AG04450 (cell line): ENCODE measurements at regions of chr5 and their contacts with region 1.

Region 1: DNA sequence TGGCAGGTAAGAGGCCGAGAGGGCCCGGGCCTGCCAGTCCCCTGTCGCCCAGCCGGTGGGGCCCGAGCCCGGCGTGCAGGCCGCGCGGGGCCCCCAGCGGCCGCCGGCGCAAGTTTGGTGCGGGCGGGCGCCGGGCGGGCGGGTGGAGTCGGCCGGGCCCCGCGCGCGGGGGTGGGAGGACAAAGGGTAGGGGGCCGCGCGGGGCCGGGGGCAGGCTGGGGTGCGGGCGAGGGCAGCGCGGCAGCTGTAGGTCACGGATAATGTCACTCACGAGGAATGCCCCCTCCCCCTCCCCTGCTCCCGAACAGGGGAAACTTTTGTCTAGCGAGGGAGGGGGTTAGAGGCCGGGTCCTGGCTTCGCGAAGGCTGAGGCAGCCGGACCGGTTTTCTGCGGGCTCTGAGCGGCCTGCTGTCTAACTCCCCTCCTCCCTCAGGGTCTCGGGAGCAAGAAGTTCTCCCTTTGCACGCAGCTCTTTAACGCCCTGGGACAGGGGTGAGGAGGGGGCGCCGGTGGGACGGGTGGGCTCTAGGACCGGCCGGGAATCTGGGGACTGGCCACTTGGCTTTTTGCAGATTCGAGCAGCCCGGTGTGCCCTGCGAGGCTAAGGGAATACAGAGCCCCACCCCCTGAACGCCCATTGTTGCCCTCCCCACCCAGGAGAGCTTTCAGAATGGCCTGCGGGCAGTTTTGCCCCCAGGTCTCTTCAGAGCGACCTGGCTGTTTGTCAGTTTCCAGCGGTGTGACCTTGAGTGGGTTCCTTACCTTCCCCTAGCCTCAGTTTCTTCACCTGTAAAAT is 21.3 kb upstream of the NDST1 start:
- DNase-seq: no peak
- H3K4me3 ChIP-seq: peak overlapping the region; percentile 87
- H3K27ac ChIP-seq: peak overlapping the region; percentile 77
- H3K27me3 ChIP-seq: no peaks in the 10 kb centered on the region
- CTCF ChIP-seq: no peak

Region 2: DNA sequence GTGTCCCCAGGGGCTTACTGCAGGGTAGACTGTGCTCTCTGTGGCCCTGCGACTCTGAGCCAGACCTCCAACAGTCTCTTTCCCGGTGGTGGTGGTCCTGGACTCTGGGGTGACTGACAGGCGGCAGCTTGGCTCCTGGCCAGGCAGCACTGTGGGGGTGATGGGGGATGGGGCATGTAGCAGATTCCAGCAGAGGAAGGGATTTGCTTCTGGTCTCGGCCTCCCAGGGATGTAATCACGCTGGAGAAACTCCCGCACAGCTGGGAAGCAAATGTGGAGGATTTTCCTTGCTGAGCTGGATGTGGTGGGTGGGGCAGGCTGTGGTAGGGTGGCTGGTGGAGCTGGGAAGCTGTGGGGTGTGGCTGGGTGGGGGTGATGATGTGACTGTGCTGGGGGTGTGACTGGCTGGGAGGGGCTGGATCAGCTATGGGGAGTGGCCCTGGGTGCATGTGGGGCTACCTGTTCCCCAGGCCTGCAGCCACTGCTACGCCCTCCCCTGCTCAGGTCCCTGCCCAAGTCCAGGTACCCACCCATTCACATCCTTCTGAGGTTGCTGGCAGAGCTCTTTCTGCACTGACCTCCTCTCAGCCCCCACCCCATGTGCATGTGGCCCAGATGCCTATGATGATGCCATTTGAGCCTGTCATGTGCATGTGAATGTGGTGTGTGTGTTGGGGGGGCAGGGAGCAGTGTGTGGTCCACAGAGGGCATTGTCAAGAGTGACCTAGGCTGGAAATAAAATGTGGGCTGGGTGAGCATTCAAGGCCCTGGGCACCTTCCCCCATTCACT is 25.2 kb after region 1 on chr5:
- CTCF ChIA-PET with region 1: interaction called, 5 read pairs
- POLR2A ChIA-PET with region 1: interaction called, 11 read pairs
- DNase-seq: no peak
- H3K4me3 ChIP-seq: no peak overlapping the region
- H3K27ac ChIP-seq: peak overlapping the region; percentile 32
- H3K27me3 ChIP-seq: no peaks in the 10 kb centered on the region
- CTCF ChIP-seq: no peak